Sigmoid colon (tissue), 7 donors: ENCODE measurements at regions of chr14 and their contacts with region 1.

Region 1: GRCh38 chr14:68191567-68192321 is 372.2 kb downstream of the RAD51B start:
- DNase-seq: no peak
- H3K4me3 ChIP-seq: no peak overlapping the region
- H3K27ac ChIP-seq: peak overlapping the region in 3 of 4 donors; percentile 82 to 87 (median 85)
- H3K4me1 ChIP-seq: peaks cover 0 to 57% (median 36%) of the 10 kb centered on the region in 4 donors
- H3K27me3 ChIP-seq: no peaks in the 10 kb centered on the region
- CTCF ChIP-seq: no peak
- EP300 ChIP-seq: peak; percentile 71 to 92 (median 86)
- POLR2A ChIP-seq: no peak

Region 2: DNA sequence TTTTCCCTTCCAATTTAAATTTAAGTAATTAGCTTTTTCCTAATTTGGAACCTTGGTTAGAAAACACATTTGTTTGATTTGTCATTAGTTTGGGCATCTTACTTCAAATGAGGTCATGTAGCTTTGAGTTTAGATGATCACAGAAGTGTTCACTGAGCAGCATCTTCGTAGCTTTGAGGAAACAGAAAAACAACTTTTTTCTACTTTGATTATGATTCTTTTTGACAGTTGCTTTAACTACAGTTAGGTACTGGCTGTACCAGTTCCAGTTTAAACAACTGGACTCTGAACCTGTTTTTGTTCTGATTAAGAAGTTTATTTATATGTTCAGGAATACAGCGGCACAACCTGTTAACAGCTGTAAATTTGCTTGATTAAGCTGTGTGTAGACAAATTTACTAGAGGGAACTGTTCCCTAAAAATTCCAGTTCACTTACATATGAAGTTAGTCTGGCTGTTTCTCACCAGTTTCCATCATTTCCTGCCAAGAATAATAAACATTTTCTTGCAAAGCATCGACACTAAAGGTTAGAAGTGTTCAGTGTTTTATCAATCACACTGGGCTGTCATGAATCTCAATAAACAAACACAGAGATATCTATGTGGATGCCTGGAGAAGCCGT is 180.2 kb before region 1 on chr14:
- intact Hi-C with region 1: loop called (anchors 5 kb)
- DNase-seq: no peak
- H3K4me3 ChIP-seq: no peak overlapping the region
- H3K27ac ChIP-seq: peak overlapping the region; percentile 73 to 80 (median 76)
- H3K4me1 ChIP-seq: peaks cover 0 to 57% (median 38%) of the 10 kb centered on the region in 4 donors
- H3K27me3 ChIP-seq: no peaks in the 10 kb centered on the region
- CTCF ChIP-seq: no peak
- EP300 ChIP-seq: peak in 3 of 4 donors; percentile 80 to 91 (median 82)
- POLR2A ChIP-seq: no peak

Region 3: GRCh38 chr14:68104518-68104917 is 87.2 kb before region 1 on chr14:
- intact Hi-C with region 1: loop called (anchors 5 kb)
- DNase-seq: no peak
- H3K4me3 ChIP-seq: no peak overlapping the region
- H3K27ac ChIP-seq: peak overlapping the region; percentile 61 to 88 (median 78)
- H3K4me1 ChIP-seq: peaks cover 0 to 76% (median 68%) of the 10 kb centered on the region in 4 donors
- H3K27me3 ChIP-seq: no peaks in the 10 kb centered on the region
- CTCF ChIP-seq: no peak
- EP300 ChIP-seq: no peak
- POLR2A ChIP-seq: no peak

Region 4: DNA sequence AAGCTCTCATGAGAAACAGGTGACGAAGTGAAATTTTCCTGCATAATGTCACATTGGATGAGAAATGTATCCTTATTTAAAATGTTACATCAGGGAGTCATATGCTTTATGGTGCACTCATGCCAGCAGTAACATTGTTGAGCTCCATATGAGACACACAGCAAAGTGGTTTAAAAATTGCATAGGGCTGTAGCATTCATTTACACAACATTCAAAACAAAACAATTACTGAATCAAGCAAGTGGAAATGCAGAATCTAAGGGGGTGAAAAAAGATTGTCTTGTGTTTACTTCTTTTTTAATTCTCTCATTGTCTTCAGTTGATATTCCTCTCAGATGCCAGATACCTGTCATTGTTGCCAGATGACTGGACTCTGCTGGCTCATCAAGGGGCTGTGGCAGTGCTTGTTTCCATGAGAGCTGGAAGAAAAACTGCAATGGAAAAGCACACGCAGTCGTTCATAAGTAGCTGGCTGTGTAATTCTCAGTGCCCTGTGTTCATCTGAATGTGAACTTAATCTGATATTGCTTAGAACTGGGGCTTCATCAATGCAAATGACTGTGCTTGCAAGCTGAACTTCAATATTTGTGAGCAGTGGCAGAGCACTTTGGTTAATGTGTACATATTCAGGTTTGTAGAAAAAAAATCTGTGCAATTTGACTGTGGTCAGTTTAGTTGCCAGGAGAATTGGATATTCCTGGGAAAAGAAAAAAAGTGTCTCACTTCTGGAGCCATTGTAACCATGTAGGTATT is 66.6 kb before region 1 on chr14:
- intact Hi-C with region 1: no loop called
- DNase-seq: no peak
- H3K4me3 ChIP-seq: no peak overlapping the region
- H3K27ac ChIP-seq: peak overlapping the region; percentile 60 to 80 (median 72)
- H3K4me1 ChIP-seq: peaks cover 0 to 38% (median 25%) of the 10 kb centered on the region in 4 donors
- H3K27me3 ChIP-seq: no peaks in the 10 kb centered on the region
- CTCF ChIP-seq: no peak
- EP300 ChIP-seq: peak in 1 of 4 donors; percentile 63
- POLR2A ChIP-seq: no peak

Region 5: GRCh38 chr14:68239988-68240771 is 48.4 kb after region 1 on chr14:
- intact Hi-C with region 1: loop called (anchors 2 kb)
- DNase-seq: peak; percentile 88
- H3K4me3 ChIP-seq: no peak overlapping the region
- H3K27ac ChIP-seq: peak overlapping the region; percentile 5 to 90 (median 85)
- H3K4me1 ChIP-seq: peaks cover 0 to 87% (median 75%) of the 10 kb centered on the region in 4 donors
- H3K27me3 ChIP-seq: no peaks in the 10 kb centered on the region
- CTCF ChIP-seq: no peak
- EP300 ChIP-seq: peak; percentile 43 to 87 (median 48)
- POLR2A ChIP-seq: no peak